Activated T-helper 1 cell treated with anti-CD3 and anti-CD28 coated beads, Interleukin-12 subunit alpha, Interleukin-12 subunit beta, Interleukin-2, Interleukin-4 antibody, amounts not matched to agents 30 ng/mL and 10 ng/mL and 1 ng/mL, durations not matched to agents 14 hours and 24 hours and 36 hours (primary cell): ENCODE measurements at regions of chr1 and their contacts with region 1.

Region 1: DNA sequence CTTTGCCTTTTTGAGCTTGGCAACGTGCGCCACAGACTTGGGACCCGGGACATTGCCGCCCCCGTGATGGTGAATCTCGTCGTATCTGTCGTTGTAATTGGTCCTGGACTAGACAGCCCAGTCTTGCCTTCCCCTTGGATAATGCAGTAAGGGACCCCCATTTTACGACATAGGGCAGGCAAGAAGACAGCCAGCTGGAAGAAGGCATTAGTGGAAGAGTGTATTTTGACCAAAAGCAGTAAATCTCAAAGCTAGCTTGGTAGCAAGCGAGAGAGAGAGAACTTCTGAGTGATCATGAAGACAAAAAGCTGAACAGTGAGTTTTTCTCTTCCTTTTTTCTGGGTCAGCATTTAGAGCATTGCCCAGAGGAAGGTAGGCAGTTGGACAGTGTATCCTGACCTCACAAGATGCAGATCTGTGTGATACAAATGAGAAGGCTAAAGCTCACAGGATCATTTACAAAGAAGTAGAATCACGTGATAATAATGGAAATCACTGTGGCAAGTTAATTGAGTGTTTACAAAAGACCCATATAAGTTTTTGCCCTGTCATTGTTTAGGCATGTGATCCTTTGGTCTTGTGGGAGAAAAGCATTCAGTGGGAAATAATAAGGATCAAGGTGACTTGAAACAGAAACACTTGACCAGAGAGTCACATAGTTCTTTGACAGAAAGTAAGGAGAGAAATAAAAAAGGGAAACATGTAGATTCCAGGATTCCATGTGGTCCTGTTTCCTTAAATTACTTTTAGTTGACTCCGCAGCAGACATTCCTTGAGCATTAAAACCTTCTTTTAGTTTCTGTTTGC is 66.2 kb downstream of the CNST start:
- DNase-seq: no peak
- H3K4me3 Mint-ChIP-seq: no peak overlapping the region
- H3K27ac Mint-ChIP-seq: no peak overlapping the region
- H3K4me1 Mint-ChIP-seq: peaks cover 6% of the 10 kb centered on the region
- H3K27me3 Mint-ChIP-seq: no peaks in the 10 kb centered on the region

Region 2: GRCh38 chr1:246689409-246690008 is 57.0 kb after region 1 on chr1:
- intact Hi-C with region 1: no loop called
- DNase-seq: peak; percentile 20
- H3K4me3 Mint-ChIP-seq: no peak overlapping the region
- H3K27ac Mint-ChIP-seq: no peak overlapping the region
- H3K4me1 Mint-ChIP-seq: no peaks in the 10 kb centered on the region
- H3K27me3 Mint-ChIP-seq: peaks cover 2% of the 10 kb centered on the region

Region 3: GRCh38 chr1:247246325-247247115 is 614.0 kb after region 1 on chr1:
- intact Hi-C with region 1: loop called (anchors 5 kb)
- DNase-seq: no peak
- H3K4me3 Mint-ChIP-seq: no peak overlapping the region
- H3K27ac Mint-ChIP-seq: no peak overlapping the region
- H3K4me1 Mint-ChIP-seq: no peaks in the 10 kb centered on the region
- H3K27me3 Mint-ChIP-seq: no peaks in the 10 kb centered on the region